B cell (primary cell): ENCODE measurements at regions of chr11 and their contacts with region 1.

Region 1: DNA sequence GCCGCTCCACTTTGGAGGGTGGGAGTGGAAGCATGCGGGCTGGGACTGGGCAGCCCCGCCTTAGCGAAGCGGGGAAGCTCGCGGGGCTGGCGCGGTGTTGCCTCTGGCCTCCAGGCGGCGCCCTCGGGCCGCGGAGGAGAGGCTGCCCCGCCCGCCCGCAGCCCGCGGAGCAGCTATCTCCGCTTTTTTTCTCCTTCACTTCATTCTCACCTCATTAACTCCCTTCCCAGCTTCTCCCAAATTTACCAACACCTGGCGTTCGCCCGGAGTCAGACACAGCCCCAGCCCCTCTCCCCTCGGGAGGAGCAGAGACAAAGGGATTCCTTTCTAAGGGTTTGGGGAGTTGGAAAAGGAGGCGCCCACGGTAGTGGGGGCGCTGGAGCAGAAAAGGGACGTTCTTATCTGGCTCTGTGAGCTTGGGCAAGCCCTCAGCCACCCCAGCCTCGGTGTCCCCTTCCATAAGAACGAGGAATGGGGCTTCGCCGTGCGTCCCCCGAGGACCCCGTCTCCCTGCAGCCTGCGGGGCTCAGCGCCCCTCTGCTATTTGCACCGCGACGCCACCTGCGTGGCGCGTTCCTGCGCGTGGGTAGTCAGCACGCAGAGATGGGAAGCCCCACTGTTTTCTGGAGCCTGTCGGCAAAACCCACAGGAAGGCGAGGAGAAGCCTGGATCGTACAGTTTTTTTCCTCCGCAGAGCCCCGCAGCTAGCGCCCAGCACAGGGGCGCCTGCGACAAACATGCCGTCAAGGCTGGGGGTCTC is 1.5 kb upstream of the WNT11 start:
- DNase-seq: peak; percentile 87
- ATAC-seq: peak; percentile 76
- H3K4me3 ChIP-seq: peak overlapping the region; percentile 56 to 82 (median 65)
- H3K4me3 Mint-ChIP-seq: peak overlapping the region; percentile 92
- H3K27ac ChIP-seq: no peak overlapping the region
- H3K27ac Mint-ChIP-seq: no peak overlapping the region
- H3K4me1 ChIP-seq: peaks cover 47 to 60% of the 10 kb centered on the region in 2 donors
- H3K4me1 Mint-ChIP-seq: peaks cover 24% of the 10 kb centered on the region
- H3K27me3 ChIP-seq: peaks cover 0 to 81% (median 47%) of the 10 kb centered on the region in 4 experiments
- H3K27me3 Mint-ChIP-seq: peaks cover 49% of the 10 kb centered on the region
- CTCF ChIP-seq: peak; percentile 98

Region 2: GRCh38 chr11:75896843-75897419 is 310.9 kb before region 1 on chr11:
- CTCF ChIA-PET with region 1: interaction called, 55 read pairs
- POLR2A ChIA-PET with region 1: no interaction called
- intact Hi-C with region 1: loop called (anchors 2 kb)
- DNase-seq: peak; percentile 52
- ATAC-seq: no peak
- H3K4me3 ChIP-seq: no peak overlapping the region
- H3K4me3 Mint-ChIP-seq: no peak overlapping the region
- H3K27ac ChIP-seq: peak overlapping the region in 1 of 2 donors; percentile 6
- H3K27ac Mint-ChIP-seq: no peak overlapping the region
- H3K4me1 ChIP-seq: peaks cover 19% of the 10 kb centered on the region in 2 donors
- H3K4me1 Mint-ChIP-seq: peaks cover 41% of the 10 kb centered on the region
- H3K27me3 ChIP-seq: no peaks in the 10 kb centered on the region
- H3K27me3 Mint-ChIP-seq: no peaks in the 10 kb centered on the region
- CTCF ChIP-seq: peak; percentile 87

Region 3: DNA sequence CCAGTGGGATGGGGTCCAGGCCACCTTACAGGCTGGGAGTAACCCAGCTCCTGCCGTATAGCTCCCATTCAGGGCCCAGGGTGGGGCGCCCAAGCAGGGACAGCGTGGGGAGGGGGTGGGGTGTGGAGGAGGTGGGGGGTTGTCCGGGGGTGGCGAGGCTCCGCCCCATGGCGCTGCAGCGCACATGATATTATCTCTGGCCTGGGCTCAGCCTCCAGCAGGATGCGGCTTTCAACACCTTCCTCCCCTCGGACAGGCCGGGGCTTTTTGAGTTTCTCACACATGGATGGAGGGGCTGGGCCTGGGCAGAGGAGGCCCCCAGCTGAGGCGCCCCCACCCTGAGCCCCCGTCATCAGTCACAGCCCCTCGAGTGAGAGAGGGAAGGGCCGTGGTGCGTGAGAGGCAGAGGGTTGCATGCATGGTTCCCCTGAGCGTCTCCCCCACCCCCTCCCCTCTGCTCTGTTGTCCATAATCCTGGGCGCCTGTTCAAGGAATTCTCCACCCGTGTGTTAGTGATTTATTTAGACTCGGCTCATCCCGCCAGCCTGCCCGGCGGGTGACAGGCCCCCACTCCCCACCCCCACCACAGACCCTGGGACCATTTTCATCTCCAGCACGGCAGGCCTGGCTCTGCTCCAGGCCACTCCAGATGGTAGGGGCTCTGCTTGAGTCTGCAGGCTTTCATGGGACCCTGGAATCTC is 46.4 kb before region 1 on chr11:
- CTCF ChIA-PET with region 1: no interaction called
- POLR2A ChIA-PET with region 1: no interaction called
- intact Hi-C with region 1: no loop called
- DNase-seq: no peak
- ATAC-seq: no peak
- H3K4me3 ChIP-seq: no peak overlapping the region
- H3K4me3 Mint-ChIP-seq: no peak overlapping the region
- H3K27ac ChIP-seq: no peak overlapping the region
- H3K27ac Mint-ChIP-seq: no peak overlapping the region
- H3K4me1 ChIP-seq: no peaks in the 10 kb centered on the region
- H3K4me1 Mint-ChIP-seq: no peaks in the 10 kb centered on the region
- H3K27me3 ChIP-seq: no peaks in the 10 kb centered on the region
- H3K27me3 Mint-ChIP-seq: no peaks in the 10 kb centered on the region
- CTCF ChIP-seq: no peak

Region 4: GRCh38 chr11:76235233-76236091 is 27.6 kb after region 1 on chr11:
- CTCF ChIA-PET with region 1: interaction called, 48 read pairs
- POLR2A ChIA-PET with region 1: interaction called, 5 read pairs
- intact Hi-C with region 1: loop called (anchors 1 kb)
- DNase-seq: peak; percentile 95
- ATAC-seq: peak; percentile 80
- H3K4me3 ChIP-seq: peak overlapping the region; percentile 84 to 97 (median 93)
- H3K4me3 Mint-ChIP-seq: peak overlapping the region; percentile 91
- H3K27ac ChIP-seq: peak overlapping the region; percentile 58 to 69
- H3K27ac Mint-ChIP-seq: peak overlapping the region; percentile 98
- H3K4me1 ChIP-seq: peaks cover 10 to 33% of the 10 kb centered on the region in 2 donors
- H3K4me1 Mint-ChIP-seq: peaks cover 29% of the 10 kb centered on the region
- H3K27me3 ChIP-seq: peaks cover 0 to 3% (median 0%) of the 10 kb centered on the region in 4 experiments
- H3K27me3 Mint-ChIP-seq: no peaks in the 10 kb centered on the region
- CTCF ChIP-seq: no peak

Region 5: GRCh38 chr11:76380967-76381719 is 173.3 kb after region 1 on chr11 and contains the starts of genes GVQW3 and THAP12:
- CTCF ChIA-PET with region 1: interaction called, 3 read pairs
- POLR2A ChIA-PET with region 1: no interaction called
- intact Hi-C with region 1: loop called (anchors 1 kb)
- DNase-seq: peak; percentile 99
- ATAC-seq: peak; percentile 88
- H3K4me3 ChIP-seq: peak within 1 kb of the TSS; percentile 61 to 98 (median 73)
- H3K4me3 Mint-ChIP-seq: peak within 1 kb of the TSS; percentile 98
- H3K27ac ChIP-seq: peak within 1 kb of the TSS in 1 of 2 donors; percentile 82
- H3K27ac Mint-ChIP-seq: peak within 1 kb of the TSS; percentile 94
- H3K4me1 ChIP-seq: peaks cover 34 to 39% of the 10 kb centered on the region in 2 donors
- H3K4me1 Mint-ChIP-seq: peaks cover 74% of the 10 kb centered on the region
- H3K27me3 ChIP-seq: no peaks in the 10 kb centered on the region
- H3K27me3 Mint-ChIP-seq: no peaks in the 10 kb centered on the region
- CTCF ChIP-seq: no peak
- total RNA-seq, gene GVQW3: 8.2 TPM in 2 replicates
- total RNA-seq, gene THAP12: 52.9 and 55.6 TPM in 2 replicates

Region 6: DNA sequence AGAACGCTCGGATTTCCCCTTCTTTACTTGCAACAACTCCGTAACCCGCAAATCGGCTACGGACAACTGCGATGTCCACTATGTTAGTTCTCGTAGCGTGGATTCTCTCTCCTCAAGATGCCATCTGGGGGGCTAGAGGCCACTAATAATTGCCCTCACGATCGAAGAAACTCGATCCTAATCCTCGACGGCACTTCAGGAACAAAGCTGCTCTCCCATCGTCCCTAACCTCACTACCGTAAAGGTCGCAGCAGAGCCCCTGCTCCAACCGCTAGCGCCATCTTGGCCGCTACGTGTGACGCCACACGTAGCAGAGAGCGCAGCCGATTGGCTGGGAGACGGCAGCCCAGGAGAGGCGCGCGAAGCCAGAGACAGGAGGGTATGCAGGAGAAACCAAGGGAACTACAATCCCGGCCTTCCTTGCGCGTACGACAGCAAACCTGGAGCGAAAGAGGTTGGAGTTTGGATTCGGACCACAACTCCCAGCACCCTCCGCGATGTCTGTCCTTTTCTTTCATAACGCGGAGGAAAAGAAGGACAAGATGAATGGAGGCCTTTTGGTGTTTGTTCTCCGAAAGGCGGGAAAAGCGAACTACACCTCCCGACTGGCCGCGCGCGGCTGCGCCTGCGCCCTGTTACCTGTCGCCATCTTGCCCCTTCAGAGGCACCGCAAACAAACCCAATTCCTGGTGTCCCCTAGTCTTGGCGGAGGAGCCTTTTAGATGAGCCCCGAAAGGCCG is 236.7 kb after region 1 on chr11 and contains the start of gene EMSY:
- CTCF ChIA-PET with region 1: no interaction called
- POLR2A ChIA-PET with region 1: no interaction called
- intact Hi-C with region 1: loop called (anchors 1 kb)
- DNase-seq: peak; percentile 96
- ATAC-seq: peak; percentile 97
- H3K4me3 ChIP-seq: peak within 1 kb of the TSS; percentile 87 to 99 (median 97)
- H3K4me3 Mint-ChIP-seq: peak within 1 kb of the TSS; percentile 96
- H3K27ac ChIP-seq: peak within 1 kb of the TSS; percentile 80 to 86
- H3K27ac Mint-ChIP-seq: peak within 1 kb of the TSS; percentile 98
- H3K4me1 ChIP-seq: peaks cover 19 to 23% of the 10 kb centered on the region in 2 donors
- H3K4me1 Mint-ChIP-seq: peaks cover 35% of the 10 kb centered on the region
- H3K27me3 ChIP-seq: no peaks in the 10 kb centered on the region
- H3K27me3 Mint-ChIP-seq: no peaks in the 10 kb centered on the region
- CTCF ChIP-seq: no peak
- total RNA-seq, gene EMSY: 54.0 and 59.7 TPM in 2 replicates

Region 7: GRCh38 chr11:76670485-76671236 is 462.8 kb after region 1 on chr11 and contains the start of gene LRRC32:
- CTCF ChIA-PET with region 1: interaction called, 3 read pairs
- POLR2A ChIA-PET with region 1: no interaction called
- intact Hi-C with region 1: loop called (anchors 5 kb)
- DNase-seq: peak; percentile 52
- ATAC-seq: no peak
- H3K4me3 ChIP-seq: peak within 1 kb of the TSS in 4 of 5 experiments; percentile 32 to 52 (median 41)
- H3K4me3 Mint-ChIP-seq: peak within 1 kb of the TSS; percentile 84
- H3K27ac ChIP-seq: peak within 1 kb of the TSS in 1 of 2 donors; percentile 15
- H3K27ac Mint-ChIP-seq: peak within 1 kb of the TSS; percentile 41
- H3K4me1 ChIP-seq: peaks cover 88 to 93% of the 10 kb centered on the region in 2 donors
- H3K4me1 Mint-ChIP-seq: peaks cover 87% of the 10 kb centered on the region
- H3K27me3 ChIP-seq: peaks cover 0 to 56% (median 27%) of the 10 kb centered on the region in 4 experiments
- H3K27me3 Mint-ChIP-seq: peaks cover 43% of the 10 kb centered on the region
- CTCF ChIP-seq: no peak
- total RNA-seq, gene LRRC32: 1.0 and 1.4 TPM in 2 replicates